ENCODE measurements at regions of chr7 and their contacts with region 1.

Region 1: GRCh38 chr7:130069978-130070860 is at the start of gene KLHDC10:
- DNase-seq: peak; percentile 90 to 98 (median 96)
- H3K4me3 ChIP-seq: peak within 1 kb of the TSS; percentile 65 to 99 (median 90)
- H3K27ac ChIP-seq: peak within 1 kb of the TSS; percentile 29 to 95 (median 87)
- H3K27me3 ChIP-seq: peaks cover 0 to 2% (median 0%) of the 10 kb centered on the region in 45 donors
- CTCF ChIP-seq: peak in 35 of 56 donors; percentile 6 to 66 (median 33)
- total RNA-seq, gene KLHDC10: 32.2 to 63.0 (median 45.7) TPM

Region 2: DNA sequence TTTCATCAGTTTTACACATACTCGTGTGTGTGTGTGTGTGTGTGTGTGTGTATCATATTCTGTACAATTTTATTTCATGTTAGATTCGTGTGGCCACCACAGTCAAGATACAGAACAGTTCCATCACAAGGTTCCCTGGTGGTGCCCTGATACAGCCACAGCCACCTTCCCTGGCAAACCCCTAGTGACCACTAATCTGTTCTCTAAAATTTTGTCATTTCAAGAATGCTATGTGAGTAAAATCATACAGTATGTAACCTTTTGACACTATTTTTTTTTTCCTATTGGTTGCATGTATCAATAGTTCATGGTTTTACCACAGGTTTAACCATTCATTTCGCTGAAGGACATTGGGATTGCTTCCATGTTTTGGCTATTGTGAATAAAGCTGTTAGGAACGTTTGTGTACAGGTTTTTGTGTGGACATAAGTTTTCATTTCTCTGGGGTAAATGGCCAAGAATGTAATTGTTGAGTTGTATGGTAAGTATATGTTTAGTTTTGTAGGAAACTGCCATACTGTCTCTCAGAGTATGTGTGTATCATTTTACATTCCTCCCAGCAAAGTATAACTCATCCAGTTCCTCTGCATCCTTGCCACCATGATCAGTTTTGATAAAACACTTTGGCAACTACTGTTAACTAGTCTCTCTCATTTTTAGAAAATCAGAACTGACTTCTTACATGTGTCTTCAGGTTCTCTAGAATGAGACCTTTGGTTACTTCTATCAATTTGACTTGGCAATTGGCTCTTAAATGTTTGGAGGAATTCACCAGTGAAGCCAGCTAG is 20.7 kb after region 1 on chr7:
- intact Hi-C with region 1: no loop called
- DNase-seq: no peak
- H3K4me3 ChIP-seq: no peak overlapping the region
- H3K27ac ChIP-seq: no peak overlapping the region
- H3K27me3 ChIP-seq: no peaks in the 10 kb centered on the region
- CTCF ChIP-seq: no peak

Region 3: GRCh38 chr7:130205084-130205947 is 135.1 kb after region 1 on chr7 and contains the start of gene TMEM209:
- intact Hi-C with region 1: loop called in 1 of 2 experiments (anchors 10 kb)
- DNase-seq: peak; percentile 89 to 96 (median 95)
- H3K4me3 ChIP-seq: peak within 1 kb of the TSS; percentile 55 to 97 (median 81)
- H3K27ac ChIP-seq: peak within 1 kb of the TSS in 58 of 59 donors; percentile 53 to 95 (median 90)
- H3K27me3 ChIP-seq: no peaks in the 10 kb centered on the region
- CTCF ChIP-seq: peak in 35 of 56 donors; percentile 4 to 58 (median 26)
- total RNA-seq, gene TMEM209: 9.8 to 28.0 (median 15.9) TPM

Region 4: GRCh38 chr7:130668257-130669084 is 598.3 kb after region 1 on chr7 and contains the start of gene COPG2:
- intact Hi-C with region 1: loop called (anchors 5 kb)
- DNase-seq: peak; percentile 58 to 91 (median 77)
- H3K4me3 ChIP-seq: peak within 1 kb of the TSS; percentile 50 to 96 (median 84)
- H3K27ac ChIP-seq: peak within 1 kb of the TSS in 58 of 59 donors; percentile 17 to 95 (median 86)
- H3K27me3 ChIP-seq: no peaks in the 10 kb centered on the region
- CTCF ChIP-seq: peak in 23 of 56 donors; percentile 6 to 34 (median 20)
- total RNA-seq, gene COPG2: 14.0 to 31.9 (median 23.5) TPM

Region 5: GRCh38 chr7:130721486-130722280 is 651.5 kb after region 1 on chr7:
- intact Hi-C with region 1: loop called (anchors 5 to 10 kb)
- DNase-seq: peak; percentile 40 to 84 (median 66)
- H3K4me3 ChIP-seq: no peak overlapping the region
- H3K27ac ChIP-seq: no peak overlapping the region
- H3K27me3 ChIP-seq: peaks cover 0 to 7% (median 0%) of the 10 kb centered on the region in 45 donors
- CTCF ChIP-seq: peak in 55 of 56 donors; percentile 27 to 83 (median 62)

Region 6: GRCh38 chr7:130831817-130832481 is 761.7 kb after region 1 on chr7:
- intact Hi-C with region 1: loop called in 1 of 2 experiments (anchors 5 kb)
- DNase-seq: no peak
- H3K4me3 ChIP-seq: no peak overlapping the region
- H3K27ac ChIP-seq: no peak overlapping the region
- H3K27me3 ChIP-seq: no peaks in the 10 kb centered on the region
- CTCF ChIP-seq: peak; percentile 74 to 94 (median 84)